Tibial artery (tissue), 4 donors: ENCODE measurements at regions of chr17 and their contacts with region 1.

Region 1: GRCh38 chr17:81923302-81924260 is 4.0 kb downstream of the MAFG start:
- DNase-seq: peak; percentile 67 to 84
- H3K4me3 ChIP-seq: peak overlapping the region; percentile 12 to 19
- H3K27ac ChIP-seq: peak overlapping the region; percentile 15 to 49
- H3K4me1 ChIP-seq: peaks cover 11 to 63% (median 46%) of the 10 kb centered on the region in 4 donors
- H3K27me3 ChIP-seq: peaks cover 0 to 6% of the 10 kb centered on the region in 2 donors
- CTCF ChIP-seq: no peak

Region 2: DNA sequence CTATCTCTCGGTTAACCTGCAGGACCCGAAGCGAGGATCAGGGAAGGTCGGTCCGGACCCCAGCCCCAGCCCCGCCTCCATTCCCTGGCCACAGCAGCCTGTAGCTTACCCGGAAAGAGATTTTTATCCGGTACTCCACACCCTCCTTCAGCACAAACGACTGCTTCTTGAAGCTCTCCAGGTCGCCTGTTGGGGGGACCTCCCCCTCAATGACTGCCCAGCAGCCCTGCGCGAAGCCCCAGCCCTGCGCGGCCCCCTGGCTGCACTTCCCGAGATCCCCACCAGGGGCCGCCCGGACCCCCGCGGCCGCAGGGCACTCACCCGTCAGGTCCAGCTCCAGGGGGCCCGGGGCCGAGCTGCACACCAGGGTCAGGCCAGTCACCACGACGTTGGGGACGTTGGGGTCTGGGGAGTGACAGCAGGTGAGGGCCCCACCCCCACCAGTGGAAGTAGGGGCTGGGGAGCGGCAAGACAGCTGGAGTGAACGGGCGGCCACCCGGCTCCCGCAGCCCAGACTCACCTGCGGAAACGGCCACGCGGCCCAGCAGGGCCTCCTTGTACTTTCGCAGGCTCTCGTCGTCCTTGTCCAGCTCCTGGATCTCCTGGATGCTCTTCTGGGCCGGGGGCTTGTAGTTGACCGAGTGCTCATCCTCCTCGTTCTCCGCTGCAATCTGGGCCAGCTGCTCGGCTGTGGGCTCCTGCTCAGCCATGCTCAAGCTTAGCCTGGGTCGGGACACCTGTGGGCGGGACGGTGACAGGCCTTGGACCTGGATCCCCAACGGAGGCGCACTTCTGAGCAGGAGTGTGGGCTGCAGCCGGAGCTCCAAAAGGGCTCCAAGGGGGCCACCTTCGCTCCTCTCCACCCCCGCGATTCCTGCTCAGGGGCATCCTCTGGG is 54.1 kb before region 1 on chr17:
- intact Hi-C with region 1: loop called (anchors 2 kb)
- DNase-seq: no peak
- H3K4me3 ChIP-seq: peak overlapping the region; percentile 61 to 94
- H3K27ac ChIP-seq: peak overlapping the region; percentile 87 to 97
- H3K4me1 ChIP-seq: peaks cover 0 to 59% (median 32%) of the 10 kb centered on the region in 4 donors
- H3K27me3 ChIP-seq: no peaks in the 10 kb centered on the region
- CTCF ChIP-seq: peak; percentile 77 to 82

Region 3: DNA sequence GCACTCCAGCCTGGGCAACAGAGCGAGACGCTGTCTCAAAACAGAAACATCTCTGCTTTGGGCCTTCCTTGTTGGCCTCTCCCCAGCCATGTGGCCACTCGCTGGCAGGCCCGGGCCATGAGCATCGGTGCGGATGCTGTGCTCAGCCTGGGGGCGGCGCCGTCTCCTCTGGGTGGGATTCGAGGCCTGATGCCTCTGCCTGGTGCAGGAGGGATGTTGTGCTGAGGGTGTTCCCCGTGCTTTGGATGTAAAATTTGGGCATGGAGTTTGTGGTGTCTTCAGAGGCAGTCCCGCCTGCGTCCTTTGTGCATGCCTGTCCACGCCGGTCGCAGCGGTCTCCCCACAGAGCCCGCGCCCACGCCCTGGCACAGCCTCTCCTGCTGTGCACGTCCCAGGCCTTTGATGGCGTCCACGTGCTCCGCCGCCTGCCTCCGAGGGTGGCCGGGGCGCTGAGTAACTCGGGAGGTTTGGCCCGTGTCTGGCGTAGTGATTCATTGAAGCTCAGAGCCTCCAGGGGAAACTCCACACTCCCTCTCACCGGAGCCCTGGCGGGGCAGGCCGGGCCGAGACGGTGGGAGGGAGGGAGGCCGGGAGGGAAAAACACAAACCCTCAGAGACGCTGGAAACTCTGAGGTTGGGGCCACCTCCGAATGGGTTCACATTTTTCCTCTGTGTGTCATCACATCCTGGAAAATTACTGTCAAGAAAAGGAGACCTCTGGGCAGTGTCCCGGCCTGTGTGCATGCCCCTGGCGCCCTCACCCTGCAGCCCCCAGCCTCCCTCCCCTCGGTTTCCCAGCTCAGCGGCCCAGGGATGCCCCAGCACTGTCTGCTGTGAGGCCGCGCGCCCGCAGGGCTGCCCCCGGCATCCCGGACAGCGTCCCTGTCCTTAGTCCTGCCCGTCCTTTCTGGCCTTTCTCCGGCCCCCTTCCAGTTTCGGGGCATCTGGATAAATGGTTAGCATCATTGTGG is 80.1 kb after region 1 on chr17:
- intact Hi-C with region 1: no loop called
- DNase-seq: peak; percentile 83 to 96
- H3K4me3 ChIP-seq: no peak overlapping the region
- H3K27ac ChIP-seq: peak overlapping the region; percentile 41 to 64
- H3K4me1 ChIP-seq: peaks cover 6 to 62% (median 51%) of the 10 kb centered on the region in 4 donors
- H3K27me3 ChIP-seq: no peaks in the 10 kb centered on the region
- CTCF ChIP-seq: no peak